ENCODE measurements at regions of chr2 and their contacts with region 1.

Region 1: DNA sequence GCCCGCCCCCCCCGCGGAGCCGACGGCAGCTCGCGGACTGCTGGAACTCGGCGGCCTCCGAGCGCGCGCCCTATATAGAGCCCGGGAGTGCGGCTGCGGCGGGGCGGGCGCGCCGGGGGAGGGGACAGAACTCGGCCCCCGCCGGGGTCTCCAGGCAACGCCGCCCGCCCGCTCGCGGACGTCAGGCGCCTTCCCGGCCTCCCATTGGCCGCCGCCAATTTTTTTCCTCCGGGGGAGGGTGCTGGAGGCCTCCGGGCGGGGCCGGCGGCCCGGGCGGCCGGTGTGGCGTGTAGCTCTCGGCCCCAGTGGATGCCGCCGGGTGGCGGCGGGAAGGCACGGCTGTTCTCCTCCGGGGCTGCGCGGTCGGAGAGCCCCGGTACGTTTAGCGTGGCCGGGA is at the start of gene ZFP36L2:
- DNase-seq: peak; percentile 95
- H3K4me3 Mint-ChIP-seq: peak within 1 kb of the TSS; percentile 93
- H3K27ac Mint-ChIP-seq: peak within 1 kb of the TSS; percentile 83
- H3K4me1 Mint-ChIP-seq: peaks cover 17% of the 10 kb centered on the region
- H3K27me3 Mint-ChIP-seq: no peaks in the 10 kb centered on the region
- CTCF ChIP-seq: no peak
- total RNA-seq, gene ZFP36L2: 107 and 162 TPM in 2 replicates

Region 2: GRCh38 chr2:42360890-42361727 is 865.4 kb before region 1 on chr2 and contains the start of gene COX7A2L:
- CTCF ChIA-PET with region 1: no interaction called
- POLR2A ChIA-PET with region 1: no interaction called
- intact Hi-C with region 1: no loop called
- DNase-seq: peak; percentile 96
- H3K4me3 Mint-ChIP-seq: peak within 1 kb of the TSS; percentile 79
- H3K27ac Mint-ChIP-seq: peak within 1 kb of the TSS; percentile 86
- H3K4me1 Mint-ChIP-seq: peaks cover 32% of the 10 kb centered on the region
- H3K27me3 Mint-ChIP-seq: no peaks in the 10 kb centered on the region
- CTCF ChIP-seq: no peak
- total RNA-seq, gene COX7A2L: 190 and 249 TPM in 2 replicates

Region 3: DNA sequence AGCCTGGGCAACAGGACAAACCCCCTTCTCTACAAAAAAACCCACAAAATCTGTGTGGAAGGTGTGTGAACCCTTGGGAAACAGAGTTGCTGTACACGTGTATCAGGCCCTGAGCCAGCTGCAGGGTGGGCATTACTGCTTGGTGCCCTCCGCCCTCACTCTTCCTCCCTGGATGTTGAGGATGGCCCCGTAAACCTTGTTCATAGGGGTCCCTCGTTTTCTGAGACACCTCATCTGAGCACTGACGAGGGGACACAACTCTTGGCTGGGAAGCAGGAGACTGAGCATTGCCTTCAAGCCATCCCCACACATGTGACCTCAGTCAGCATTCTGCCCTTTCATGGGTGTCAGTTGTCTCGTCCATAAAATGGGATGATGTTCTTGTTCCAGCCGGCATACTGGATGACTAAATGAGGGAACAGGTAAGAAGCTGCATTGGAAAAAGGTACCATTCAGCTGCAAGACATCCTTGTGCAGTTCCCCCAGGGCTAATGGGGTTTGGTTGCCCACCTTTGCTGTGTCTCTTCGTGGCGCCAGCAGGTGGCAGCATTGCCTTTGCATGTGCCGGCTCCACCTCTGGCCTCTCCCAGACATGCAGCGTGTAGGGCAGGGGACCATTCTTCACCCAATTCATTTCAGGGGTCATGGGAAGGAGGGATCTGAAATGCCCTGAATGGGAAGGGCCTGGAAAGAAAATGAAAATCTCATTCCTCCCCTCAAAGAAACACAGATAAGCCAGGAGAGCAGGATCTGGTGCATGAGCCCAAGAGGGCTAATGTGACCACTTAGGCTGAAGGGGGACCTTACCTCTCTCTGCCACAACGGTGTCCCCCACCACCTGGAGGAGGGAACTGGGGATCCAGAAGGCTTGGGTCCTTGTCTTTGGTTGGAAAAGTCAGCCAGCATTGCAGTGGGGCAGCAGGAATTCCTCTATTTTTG is 397.8 kb before region 1 on chr2:
- CTCF ChIA-PET with region 1: interaction called, 16 read pairs
- POLR2A ChIA-PET with region 1: no interaction called
- intact Hi-C with region 1: loop called (anchors 1 kb)
- DNase-seq: peak; percentile 77
- H3K4me3 Mint-ChIP-seq: no peak overlapping the region
- H3K27ac Mint-ChIP-seq: peak overlapping the region; percentile 19
- H3K4me1 Mint-ChIP-seq: peaks cover 26% of the 10 kb centered on the region
- H3K27me3 Mint-ChIP-seq: no peaks in the 10 kb centered on the region
- CTCF ChIP-seq: peak; percentile 90

Region 4: DNA sequence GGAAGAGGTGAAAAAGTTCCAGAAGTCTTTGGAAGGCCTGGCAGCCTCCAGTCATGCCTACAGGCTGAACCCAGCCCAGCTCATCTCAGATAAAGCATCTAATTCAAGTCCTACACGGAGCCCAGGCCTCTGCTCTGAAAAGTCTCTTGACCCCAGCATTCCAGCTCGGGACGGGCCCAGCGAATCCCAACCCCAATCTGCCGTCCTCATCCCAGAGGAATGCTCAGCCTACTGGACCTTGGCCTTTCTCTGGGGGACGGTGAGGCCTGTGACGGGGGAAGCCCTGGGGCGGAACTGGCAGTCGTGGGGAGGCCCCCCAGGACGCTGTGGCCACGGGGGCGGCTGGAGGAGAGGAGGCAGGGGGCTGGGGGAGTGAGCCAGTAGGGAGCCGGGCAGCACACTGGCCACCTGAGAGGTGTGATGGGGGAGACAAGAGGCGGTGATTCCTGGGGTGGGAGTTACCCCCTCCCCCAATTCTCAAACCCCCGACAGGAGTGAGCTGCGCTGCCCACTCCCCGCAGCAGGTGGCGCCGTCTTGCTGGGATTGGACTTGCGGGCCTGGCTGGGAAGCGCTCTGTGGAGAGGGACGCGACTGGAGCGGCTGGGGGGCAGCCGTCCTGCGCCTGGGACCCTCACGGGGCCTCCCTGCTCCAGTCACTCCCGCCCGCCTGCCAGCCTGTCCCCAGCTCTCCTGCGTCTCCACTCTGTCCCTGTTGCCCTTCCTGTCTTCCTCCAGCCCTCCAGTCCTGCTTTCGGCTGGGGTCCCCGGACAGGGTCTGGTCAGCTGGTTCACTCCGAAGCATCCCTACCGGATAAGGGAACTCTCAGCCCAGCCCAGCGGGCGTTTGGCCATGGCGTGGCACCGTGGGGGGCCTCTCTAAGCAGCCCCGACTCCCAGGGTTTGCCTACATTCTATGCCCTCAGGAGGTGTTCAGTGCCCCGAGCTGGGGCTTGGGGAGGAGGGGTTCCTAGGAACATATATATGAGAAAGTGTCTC is 251.5 kb before region 1 on chr2:
- CTCF ChIA-PET with region 1: interaction called, 108 read pairs
- POLR2A ChIA-PET with region 1: interaction called, 50 read pairs
- intact Hi-C with region 1: loop called (anchors 1 kb)
- DNase-seq: peak; percentile 64
- H3K4me3 Mint-ChIP-seq: no peak overlapping the region
- H3K27ac Mint-ChIP-seq: peak overlapping the region; percentile 52
- H3K4me1 Mint-ChIP-seq: peaks cover 38% of the 10 kb centered on the region
- H3K27me3 Mint-ChIP-seq: no peaks in the 10 kb centered on the region
- CTCF ChIP-seq: peak; percentile 95

Region 5: DNA sequence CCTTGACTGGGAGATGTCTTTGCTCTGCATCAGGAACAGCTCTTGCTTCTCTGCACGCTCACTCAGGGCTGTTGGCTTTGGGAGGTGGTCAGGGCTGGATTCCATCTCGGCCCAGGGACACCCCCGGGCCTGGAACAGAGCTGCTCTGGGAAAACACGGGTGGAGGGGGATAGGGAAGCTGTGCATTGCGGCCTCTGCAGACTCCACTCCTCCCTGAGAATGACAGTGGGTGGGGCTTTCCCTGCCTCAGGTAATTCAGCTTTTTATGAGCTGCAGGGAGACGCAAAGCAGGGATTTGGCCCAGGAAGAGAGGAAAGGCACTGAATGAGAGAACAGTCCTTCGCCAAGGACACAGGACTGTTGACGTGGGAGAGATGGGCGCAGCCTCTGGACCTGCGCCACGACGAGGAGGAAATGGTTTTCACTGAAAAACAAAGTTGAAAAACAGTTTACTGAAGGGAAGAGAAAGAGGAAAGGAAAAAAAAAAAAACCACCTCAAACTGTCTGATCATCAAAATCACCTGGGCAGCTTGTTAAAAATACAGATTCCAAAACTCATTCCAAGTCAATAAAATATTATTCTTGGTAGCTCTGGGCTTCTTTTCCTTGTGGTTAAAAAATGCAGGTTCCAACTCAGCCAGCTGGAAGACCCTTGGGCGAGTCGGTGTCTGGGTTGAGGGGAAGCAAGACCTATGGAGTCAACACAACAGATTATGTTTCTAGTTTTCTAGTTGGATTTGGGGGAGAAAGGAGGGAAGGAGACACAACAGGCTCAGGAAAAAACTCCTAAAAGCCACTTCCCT is 194.1 kb before region 1 on chr2:
- CTCF ChIA-PET with region 1: interaction called, 4 read pairs
- POLR2A ChIA-PET with region 1: interaction called, 11 read pairs
- intact Hi-C with region 1: no loop called
- DNase-seq: peak; percentile 82
- H3K4me3 Mint-ChIP-seq: peak overlapping the region; percentile 12
- H3K27ac Mint-ChIP-seq: peak overlapping the region; percentile 85
- H3K4me1 Mint-ChIP-seq: peaks cover 34% of the 10 kb centered on the region
- H3K27me3 Mint-ChIP-seq: no peaks in the 10 kb centered on the region
- CTCF ChIP-seq: no peak

Region 6: DNA sequence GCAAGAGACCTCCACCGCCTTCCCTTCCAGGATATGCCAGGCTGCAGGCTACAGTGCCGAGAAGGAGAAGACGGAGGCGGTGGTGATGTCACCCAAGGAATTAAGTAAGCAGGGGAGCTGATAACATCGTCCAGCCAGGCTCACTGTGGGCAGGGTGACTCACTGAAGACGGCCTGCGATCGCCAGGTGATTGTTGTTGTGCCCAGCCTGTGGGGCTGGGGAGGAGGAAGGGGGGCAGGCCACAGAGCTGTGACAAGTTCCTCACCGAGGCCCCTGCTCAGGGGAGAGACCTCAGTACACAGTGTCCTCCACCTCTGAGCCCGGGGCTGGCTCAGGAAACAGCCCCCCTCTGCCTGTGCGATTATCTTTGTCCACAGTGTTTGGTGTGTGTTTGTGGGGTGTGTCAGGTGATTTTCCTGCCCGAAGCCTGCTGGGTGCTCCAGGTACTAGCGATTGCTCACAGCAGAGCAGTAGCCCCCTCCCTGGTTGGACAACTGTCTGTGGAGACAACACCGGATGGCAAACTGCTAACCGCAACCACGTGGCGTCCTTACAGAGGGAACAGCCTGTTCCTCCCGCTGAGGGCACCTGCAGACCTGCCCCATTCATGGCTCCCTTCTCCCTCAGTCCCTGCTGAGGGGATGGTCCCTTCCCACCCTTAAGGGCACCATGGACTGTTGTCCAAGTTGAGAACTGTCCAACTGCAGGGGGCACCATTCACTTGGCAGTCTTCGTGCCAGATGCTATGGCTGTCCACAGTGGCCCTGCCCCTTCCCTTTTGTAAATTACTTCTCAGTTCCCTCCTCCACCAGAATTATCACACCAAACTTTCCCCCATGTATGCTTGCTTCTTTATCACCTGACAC is 95.3 kb before region 1 on chr2:
- CTCF ChIA-PET with region 1: interaction called, 17 read pairs
- POLR2A ChIA-PET with region 1: interaction called, 240 read pairs
- intact Hi-C with region 1: loop called (anchors 1 kb)
- DNase-seq: peak; percentile 99
- H3K4me3 Mint-ChIP-seq: peak overlapping the region; percentile 19
- H3K27ac Mint-ChIP-seq: peak overlapping the region; percentile 89
- H3K4me1 Mint-ChIP-seq: peaks cover 42% of the 10 kb centered on the region
- H3K27me3 Mint-ChIP-seq: no peaks in the 10 kb centered on the region
- CTCF ChIP-seq: peak; percentile 63

Region 7: DNA sequence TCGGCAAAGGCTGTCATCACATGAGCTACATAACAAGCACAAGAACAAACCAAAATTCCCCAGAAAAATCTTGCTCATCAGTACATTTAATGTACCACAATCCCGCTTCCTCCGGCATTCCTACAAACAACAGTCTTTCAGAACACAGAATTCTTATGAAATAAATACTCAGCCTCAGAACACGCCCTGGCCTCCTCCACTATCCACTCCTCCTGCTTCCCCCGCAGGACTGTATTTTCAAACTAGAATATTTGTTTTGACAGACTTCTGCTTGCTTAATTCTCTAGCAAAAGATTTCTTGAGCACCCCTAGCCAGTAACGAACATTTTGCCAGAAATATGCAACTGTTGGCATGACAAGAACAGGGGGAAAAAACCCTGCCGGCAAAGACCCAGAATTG is 238.0 kb after region 1 on chr2:
- CTCF ChIA-PET with region 1: interaction called, 12 read pairs
- POLR2A ChIA-PET with region 1: interaction called, 27 read pairs
- intact Hi-C with region 1: no loop called
- DNase-seq: peak; percentile 59
- H3K4me3 Mint-ChIP-seq: peak overlapping the region; percentile 35
- H3K27ac Mint-ChIP-seq: peak overlapping the region; percentile 95
- H3K4me1 Mint-ChIP-seq: peaks cover 56% of the 10 kb centered on the region
- H3K27me3 Mint-ChIP-seq: no peaks in the 10 kb centered on the region
- CTCF ChIP-seq: no peak

Measured in MCF 10A (cell line).